ENCODE measurements at regions of chr3 and their contacts with region 1.

Region 1: GRCh38 chr3:14548321-14548729 is 8.2 kb upstream of the GRIP2 start:
- H3K4me3 ChIP-seq: no peak overlapping the region
- H3K27ac ChIP-seq: no peak overlapping the region
- H3K4me1 ChIP-seq: no peaks in the 10 kb centered on the region
- CTCF ChIP-seq: peak; percentile 80

Region 2: GRCh38 chr3:14216257-14217048 is 331.9 kb before region 1 on chr3:
- CTCF ChIA-PET with region 1: no interaction called
- POLR2A ChIA-PET with region 1: no interaction called
- H3K4me3 ChIP-seq: no peak overlapping the region
- H3K27ac ChIP-seq: no peak overlapping the region
- H3K4me1 ChIP-seq: no peaks in the 10 kb centered on the region
- CTCF ChIP-seq: no peak

Region 3: GRCh38 chr3:14508961-14509795 is 39.1 kb before region 1 on chr3:
- CTCF ChIA-PET with region 1: interaction called, 34 read pairs
- POLR2A ChIA-PET with region 1: no interaction called
- H3K4me3 ChIP-seq: no peak overlapping the region
- H3K27ac ChIP-seq: no peak overlapping the region
- H3K4me1 ChIP-seq: no peaks in the 10 kb centered on the region
- CTCF ChIP-seq: peak; percentile 79

Region 4: DNA sequence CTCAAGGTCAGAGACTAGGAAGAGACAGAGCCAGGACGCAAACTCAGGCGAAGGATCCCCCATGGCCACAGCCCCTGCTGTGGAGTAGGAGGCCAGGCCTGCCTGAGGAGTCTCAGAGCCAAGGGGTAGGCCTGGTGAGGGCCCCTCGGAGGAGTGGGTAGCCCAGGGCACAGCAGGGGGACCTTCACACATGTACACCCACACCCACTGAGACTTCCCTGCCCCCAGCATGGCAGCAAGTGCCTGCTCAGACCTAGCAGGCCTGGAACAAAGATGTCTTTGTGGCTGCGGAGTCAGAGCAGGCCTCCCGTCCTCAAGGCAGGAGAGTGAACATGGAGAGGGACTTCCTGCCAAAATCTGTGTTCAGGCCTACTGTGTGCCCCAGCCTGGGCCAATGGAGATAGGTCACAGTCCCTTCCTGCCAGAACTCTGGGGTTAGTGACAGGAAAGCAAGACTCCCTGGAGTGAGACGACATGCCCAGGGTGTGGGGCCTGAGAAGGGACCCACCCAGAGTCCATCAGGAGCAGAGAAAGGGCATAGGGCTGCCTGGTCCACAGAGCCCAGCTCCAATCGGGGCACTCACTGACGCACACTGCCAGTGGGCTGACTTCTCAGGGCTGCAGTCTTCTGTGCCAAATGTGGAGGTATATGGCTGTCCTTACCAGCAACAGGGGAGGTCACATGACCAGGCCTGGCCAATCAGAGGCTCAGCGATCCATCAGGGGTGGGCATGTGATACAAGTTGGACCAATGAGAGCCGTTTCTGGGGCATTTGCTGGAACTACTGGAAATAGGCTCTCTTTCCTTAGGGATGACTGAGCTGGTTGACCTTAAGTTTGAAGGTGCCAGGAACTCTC is 10.5 kb before region 1 on chr3:
- CTCF ChIA-PET with region 1: interaction called, 11 read pairs
- POLR2A ChIA-PET with region 1: no interaction called
- H3K4me3 ChIP-seq: no peak overlapping the region
- H3K27ac ChIP-seq: no peak overlapping the region
- H3K4me1 ChIP-seq: no peaks in the 10 kb centered on the region
- CTCF ChIP-seq: no peak